A549 (cell line): ENCODE measurements at regions of chr9 and their contacts with region 1.

Region 1: GRCh38 chr9:120714088-120714845 is at the start of gene MEGF9:
- DNase-seq: peak; percentile 94 to 97
- ATAC-seq: peak; percentile 87 to 96
- H3K4me3 ChIP-seq: peak within 1 kb of the TSS; percentile 86
- H3K27ac ChIP-seq: peak within 1 kb of the TSS; percentile 95 to 96
- H3K4me1 ChIP-seq: peaks cover 24% of the 10 kb centered on the region
- CTCF ChIP-seq: no peak; the same call in 2 of the 3 replicates
- EP300 ChIP-seq: no peak
- POLR2A ChIP-seq: peak; percentile 59
- RAD21 ChIP-seq: no peak
- polyA plus RNA-seq, gene MEGF9: 25.7 and 32.8 TPM in 2 replicates

Region 2: DNA sequence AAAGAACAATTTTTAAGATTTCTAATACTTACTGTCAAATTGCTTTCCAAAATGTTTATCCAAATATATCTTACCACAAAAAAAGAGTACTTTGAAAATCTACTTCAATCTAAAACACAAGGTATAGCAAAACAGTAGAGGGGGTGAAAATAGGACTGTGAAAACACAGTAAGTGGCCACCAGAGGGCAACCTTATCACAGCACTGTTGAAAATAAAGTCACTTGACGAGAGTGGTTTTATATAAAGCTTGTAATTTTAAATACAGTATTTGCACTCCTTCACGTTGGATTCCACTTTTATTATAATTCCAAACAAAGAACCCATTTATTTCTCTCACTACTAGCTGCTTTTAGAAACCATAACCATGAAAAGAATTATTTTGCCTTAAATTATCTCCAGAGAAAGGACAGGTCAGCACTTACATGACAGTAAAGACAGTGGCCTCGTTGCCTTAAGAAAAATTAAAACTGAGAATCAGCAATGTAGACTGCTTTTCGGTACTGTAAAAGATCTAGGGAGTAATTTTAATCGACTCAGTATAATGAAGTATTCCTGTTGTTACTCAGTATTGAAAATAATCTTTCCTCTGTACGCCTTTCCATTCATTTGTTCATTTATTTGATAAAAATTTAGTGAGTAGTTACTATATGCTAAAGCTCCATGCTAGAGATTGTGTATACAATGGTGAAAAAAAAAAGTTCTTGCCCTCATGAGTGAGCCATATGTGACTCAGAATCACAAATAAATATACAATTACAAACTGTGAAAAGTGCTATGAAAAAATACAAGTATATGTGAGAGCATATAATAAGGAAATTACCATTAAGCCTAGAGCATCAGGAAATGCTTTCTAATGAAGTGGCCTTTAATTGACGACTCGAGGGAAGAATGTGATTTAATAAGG is 94.3 kb before region 1 on chr9:
- CTCF ChIA-PET with region 1: interaction called, 19 read pairs
- POLR2A ChIA-PET with region 1: interaction called, 8 read pairs
- DNase-seq: peak; percentile 76 to 77
- ATAC-seq: peak; percentile 91 to 95
- H3K4me3 ChIP-seq: no peak overlapping the region
- H3K27ac ChIP-seq: peak overlapping the region; percentile 62 to 67
- H3K4me1 ChIP-seq: peaks cover 80% of the 10 kb centered on the region
- CTCF ChIP-seq: peak; percentile 96
- EP300 ChIP-seq: no peak
- POLR2A ChIP-seq: no peak
- RAD21 ChIP-seq: peak; percentile 95 to 96

Region 3: GRCh38 chr9:120696551-120697230 is 17.6 kb before region 1 on chr9:
- CTCF ChIA-PET with region 1: interaction called, 13 read pairs
- POLR2A ChIA-PET with region 1: interaction called, 11 read pairs
- DNase-seq: peak in 1 of 2 experiments; percentile 62
- ATAC-seq: peak; percentile 76 to 82
- H3K4me3 ChIP-seq: 0 out of 3 replicates have a peak overlapping the region, but pooled peaks have one; percentile 9
- H3K27ac ChIP-seq: peak overlapping the region; percentile 81 to 89
- H3K4me1 ChIP-seq: peaks cover 96% of the 10 kb centered on the region
- CTCF ChIP-seq: no peak
- EP300 ChIP-seq: 0 out of 5 replicates have a peak, but pooled peaks of 1 of the 2 experiments have one; percentile 18
- POLR2A ChIP-seq: no peak
- RAD21 ChIP-seq: peak in 1 of 2 experiments; percentile 2; a peak in 1 of 5 replicates

Region 4: DNA sequence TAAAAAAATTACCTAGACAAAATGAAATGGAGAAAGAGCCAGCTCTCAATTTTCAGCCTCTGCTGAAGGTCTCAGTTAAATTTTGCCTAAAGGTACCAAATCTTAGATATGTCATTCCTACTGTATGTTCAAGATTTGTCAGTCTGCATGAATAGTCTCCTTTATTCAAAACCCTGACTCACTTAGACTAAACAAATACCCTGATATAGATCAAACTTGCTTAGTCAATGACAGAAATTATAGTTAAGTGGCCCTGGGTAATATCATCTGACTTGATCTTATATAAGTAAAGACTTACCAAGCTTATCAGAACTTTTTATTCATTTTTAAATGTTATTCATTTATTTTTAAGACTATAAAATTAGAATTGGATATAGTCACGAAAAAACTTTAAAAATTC is 12.2 kb before region 1 on chr9:
- CTCF ChIA-PET with region 1: interaction called, 13 read pairs
- POLR2A ChIA-PET with region 1: interaction called, 11 read pairs
- DNase-seq: peak in 1 of 2 experiments; percentile 39
- ATAC-seq: peak in 1 of 2 experiments; percentile 60; a peak in 3 of 6 replicates
- H3K4me3 ChIP-seq: no peak overlapping the region
- H3K27ac ChIP-seq: peak overlapping the region; percentile 53 to 78
- H3K4me1 ChIP-seq: peaks cover 94% of the 10 kb centered on the region
- CTCF ChIP-seq: no peak
- EP300 ChIP-seq: no peak
- POLR2A ChIP-seq: no peak
- RAD21 ChIP-seq: no peak

Region 5: DNA sequence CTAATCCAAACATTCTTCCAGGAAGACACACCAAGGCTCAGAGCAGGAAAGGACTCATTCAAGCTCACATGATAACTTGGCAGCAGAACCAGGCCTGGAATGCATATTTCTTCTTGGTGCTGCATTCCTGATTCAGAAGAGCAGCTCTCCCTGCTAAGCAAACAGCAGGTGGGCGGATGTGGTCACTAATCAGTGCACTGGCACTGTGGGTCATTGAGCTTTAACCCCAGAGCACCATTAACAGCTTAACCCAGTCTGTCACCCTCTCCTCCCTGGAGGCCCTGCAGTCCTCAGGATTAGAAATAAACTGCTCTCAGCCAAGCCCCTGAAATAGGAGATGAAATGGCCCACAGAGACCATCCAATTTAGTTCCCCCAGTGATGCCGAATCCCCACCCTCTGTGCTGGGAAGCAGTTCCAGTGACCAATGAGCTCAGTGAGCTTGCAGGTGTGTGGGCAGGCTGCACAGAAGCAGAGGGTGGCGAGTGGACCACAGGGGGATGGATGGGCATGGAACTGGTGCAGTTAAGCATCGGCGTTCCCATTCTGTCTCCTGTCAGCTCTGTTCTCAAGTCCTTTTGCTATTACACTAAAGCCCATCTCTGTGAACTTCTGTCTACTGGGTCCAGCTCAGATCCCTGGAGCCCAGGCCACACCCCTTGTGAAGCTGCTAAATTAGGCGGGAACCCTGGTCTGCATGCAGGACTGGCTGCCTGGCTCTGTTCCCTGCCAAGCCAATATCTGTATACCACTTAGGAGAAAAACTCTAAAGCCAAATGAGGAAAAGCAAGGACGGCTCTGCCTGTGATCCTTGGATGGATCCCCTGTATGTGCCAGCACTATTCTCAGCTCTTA is 16.6 kb after region 1 on chr9:
- CTCF ChIA-PET with region 1: interaction called, 5 read pairs
- POLR2A ChIA-PET with region 1: interaction called, 12 read pairs
- DNase-seq: no peak
- ATAC-seq: peak; percentile 30 to 35; a peak in 3 of 6 replicates
- H3K4me3 ChIP-seq: no peak overlapping the region
- H3K27ac ChIP-seq: peak overlapping the region; percentile 5 to 11; a peak in 2 of 6 replicates
- H3K4me1 ChIP-seq: peaks cover 23% of the 10 kb centered on the region
- CTCF ChIP-seq: no peak
- EP300 ChIP-seq: no peak
- POLR2A ChIP-seq: no peak
- RAD21 ChIP-seq: no peak

Region 6: DNA sequence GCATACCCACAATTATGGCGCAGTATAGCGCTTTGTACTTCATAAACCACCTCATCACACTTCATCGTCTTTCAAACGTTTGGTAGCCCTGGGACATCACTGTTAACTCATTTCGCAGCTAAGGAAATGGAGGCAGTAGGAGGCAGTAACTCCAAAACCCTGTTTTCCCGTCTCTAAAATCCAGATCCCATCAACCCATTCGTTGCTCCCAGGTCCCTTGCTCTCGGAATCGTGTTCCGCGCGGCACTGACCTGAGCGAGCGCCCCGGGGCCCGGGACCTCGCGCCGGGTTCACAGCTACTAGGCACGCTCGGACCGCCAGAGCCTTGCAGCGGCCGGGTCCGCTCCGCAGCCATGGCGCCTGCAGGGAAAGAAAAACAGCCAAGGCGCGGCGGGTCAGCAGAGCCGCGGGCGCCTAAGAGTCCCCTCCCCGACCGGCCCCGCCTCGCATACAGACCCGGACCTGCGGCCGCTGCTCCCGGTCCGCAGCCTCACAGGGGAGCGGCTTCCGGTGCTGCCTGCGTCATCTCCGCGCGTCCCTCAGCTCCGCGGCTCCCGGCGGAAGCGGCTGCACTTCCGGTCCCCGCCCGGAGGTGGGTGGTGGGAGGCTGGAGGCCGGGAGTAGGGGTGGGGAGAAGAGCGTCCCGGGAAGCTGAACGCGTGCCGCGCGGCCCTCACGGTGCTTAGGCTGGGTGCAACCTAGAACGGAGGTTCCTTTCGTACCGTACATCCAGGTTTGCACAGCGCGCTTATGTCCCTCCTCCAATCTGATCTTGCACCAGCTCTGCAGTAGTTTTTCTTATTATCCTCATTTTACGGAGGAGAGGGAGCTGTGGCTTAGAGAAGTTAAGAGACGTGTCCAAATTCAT is 78.9 kb after region 1 on chr9 and contains the start of gene FBXW2:
- CTCF ChIA-PET with region 1: no interaction called
- POLR2A ChIA-PET with region 1: interaction called, 13 read pairs
- DNase-seq: peak; percentile 90 to 92
- ATAC-seq: peak; percentile 99
- H3K4me3 ChIP-seq: peak within 1 kb of the TSS; percentile 67
- H3K27ac ChIP-seq: peak within 1 kb of the TSS; percentile 89 to 97
- H3K4me1 ChIP-seq: peaks cover 16% of the 10 kb centered on the region
- CTCF ChIP-seq: no peak
- EP300 ChIP-seq: no peak
- POLR2A ChIP-seq: peak; percentile 96
- RAD21 ChIP-seq: no peak; a peak in 2 of 5 replicates
- polyA plus RNA-seq, gene FBXW2: 56.0 and 60.0 TPM in 2 replicates